Heart left ventricle (tissue), 16 donors: ENCODE measurements at regions of chr1 and their contacts with region 1.

Region 1: GRCh38 chr1:154558575-154559465 is at the start of gene UBE2Q1:
- DNase-seq: peak; percentile 99 to 100 (median 99)
- ATAC-seq: peak; percentile 97 to 98 (median 98)
- H3K4me3 ChIP-seq: peak within 1 kb of the TSS; percentile 67 to 98 (median 95)
- H3K27ac ChIP-seq: peak within 1 kb of the TSS; percentile 85 to 97 (median 94)
- H3K4me1 ChIP-seq: peaks cover 3 to 36% (median 22%) of the 10 kb centered on the region in 12 donors
- H3K27me3 ChIP-seq: no peaks in the 10 kb centered on the region
- CTCF ChIP-seq: no peak
- POLR2A ChIP-seq: peak in 1 of 2 donors; percentile 63
- total RNA-seq, gene UBE2Q1: 22.1 to 79.4 (median 58.8) TPM

Region 2: GRCh38 chr1:154404984-154405761 is 153.6 kb before region 1 on chr1 and contains the start of gene IL6R:
- intact Hi-C with region 1: loop called in 2 of 10 experiments (anchors 5 to 10 kb)
- DNase-seq: peak; percentile 90 to 97 (median 95)
- ATAC-seq: peak; percentile 70 to 91 (median 88)
- H3K4me3 ChIP-seq: peak within 1 kb of the TSS; percentile 56 to 81 (median 72)
- H3K27ac ChIP-seq: peak within 1 kb of the TSS; percentile 76 to 99 (median 94)
- H3K4me1 ChIP-seq: peaks cover 0 to 94% (median 37%) of the 10 kb centered on the region in 12 donors
- H3K27me3 ChIP-seq: no peaks in the 10 kb centered on the region
- CTCF ChIP-seq: peak; percentile 23 to 75 (median 56)
- POLR2A ChIP-seq: peak in 1 of 2 donors; percentile 79
- total RNA-seq, gene IL6R: 5.7 to 26.6 (median 13.1) TPM

Region 3: GRCh38 chr1:154669464-154670282 is 110.9 kb after region 1 on chr1:
- intact Hi-C with region 1: loop called in 6 of 10 experiments (anchors 2 to 10 kb)
- DNase-seq: peak; percentile 73 to 79 (median 76)
- ATAC-seq: peak; percentile 93 to 100 (median 98)
- H3K4me3 ChIP-seq: no peak overlapping the region
- H3K27ac ChIP-seq: no peak overlapping the region
- H3K4me1 ChIP-seq: peaks cover 0 to 3% (median 0%) of the 10 kb centered on the region in 12 donors
- H3K27me3 ChIP-seq: no peaks in the 10 kb centered on the region
- CTCF ChIP-seq: peak; percentile 69 to 90 (median 80)
- POLR2A ChIP-seq: no peak

Region 4: DNA sequence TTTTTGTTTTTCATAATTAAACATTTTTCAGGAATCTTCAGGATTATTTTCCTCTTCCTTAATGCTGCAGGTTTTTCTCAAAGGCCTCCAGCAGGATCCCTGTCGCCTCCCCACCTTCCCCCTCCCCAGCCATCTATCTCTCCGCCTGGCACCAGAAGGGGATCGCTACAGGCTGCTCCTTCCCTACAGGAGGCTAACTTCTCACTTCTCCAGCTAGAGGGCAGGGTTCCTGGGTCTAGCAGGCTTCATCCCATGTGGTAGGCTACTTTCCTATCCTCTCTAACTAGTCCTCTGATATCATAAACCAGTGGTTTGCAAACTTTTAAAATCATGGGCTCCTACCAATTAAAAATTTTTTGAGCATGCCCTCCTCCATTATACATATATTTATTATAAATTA is 207.2 kb after region 1 on chr1:
- intact Hi-C with region 1: loop called in 2 of 10 experiments (anchors 5 to 10 kb)
- DNase-seq: no peak
- ATAC-seq: peak in 3 of 4 donors; percentile 36 to 64 (median 54)
- H3K4me3 ChIP-seq: no peak overlapping the region
- H3K27ac ChIP-seq: no peak overlapping the region
- H3K4me1 ChIP-seq: peaks cover 0 to 23% (median 15%) of the 10 kb centered on the region in 12 donors
- H3K27me3 ChIP-seq: peaks cover 0 to 17% (median 0%) of the 10 kb centered on the region in 9 donors
- CTCF ChIP-seq: peak in 9 of 12 donors; percentile 12 to 44 (median 26)
- POLR2A ChIP-seq: no peak

Region 5: GRCh38 chr1:154884869-154885701 is 326.3 kb after region 1 on chr1:
- intact Hi-C with region 1: loop called in 1 of 10 experiments (anchors 5 kb)
- DNase-seq: no peak
- ATAC-seq: peak in 1 of 4 donors; percentile 39
- H3K4me3 ChIP-seq: no peak overlapping the region
- H3K27ac ChIP-seq: peak overlapping the region in 1 of 12 donors; percentile 0
- H3K4me1 ChIP-seq: peaks cover 0 to 16% (median 5%) of the 10 kb centered on the region in 12 donors
- H3K27me3 ChIP-seq: no peaks in the 10 kb centered on the region
- CTCF ChIP-seq: no peak
- POLR2A ChIP-seq: no peak